IMR-90 (cell line): ENCODE measurements at regions of chr1 and their contacts with region 1.

Region 1: DNA sequence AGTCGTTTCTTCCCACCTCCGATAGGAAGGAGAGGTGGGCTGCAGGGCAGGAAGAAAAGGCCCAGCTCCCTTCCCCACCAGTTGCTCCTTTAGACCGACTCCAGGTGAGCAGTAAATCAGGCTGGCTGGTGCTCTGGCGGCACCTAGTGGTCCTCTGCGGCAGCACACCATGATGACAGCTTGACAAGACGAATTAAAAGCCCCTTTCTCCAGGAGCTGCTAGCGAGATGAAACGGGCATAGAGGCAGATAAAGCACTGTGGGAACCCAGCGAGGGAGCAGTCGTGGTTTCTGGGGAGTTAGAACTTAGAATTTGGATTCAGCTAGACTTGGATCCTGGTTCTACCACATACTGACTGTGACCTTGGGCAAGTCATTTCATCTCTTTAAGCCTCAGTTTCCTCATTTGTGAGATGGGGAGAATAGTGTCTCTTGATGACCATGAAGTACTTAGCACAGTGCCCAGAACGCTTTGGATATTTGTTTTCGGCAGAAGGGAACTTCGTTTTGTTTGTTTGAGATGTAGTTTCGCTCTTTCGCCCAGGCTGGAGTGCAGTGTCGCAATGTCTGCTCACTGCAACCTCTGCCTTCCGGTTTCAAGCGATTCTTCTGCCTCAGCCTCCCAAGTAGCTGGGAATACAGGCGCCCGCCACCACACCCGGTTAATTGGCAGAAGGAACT is 21.8 kb upstream of the COL9A2 start:
- DNase-seq: peak; percentile 77
- ATAC-seq: peak; percentile 97
- H3K4me3 ChIP-seq: no peak overlapping the region
- H3K27ac ChIP-seq: no peak overlapping the region
- H3K4me1 ChIP-seq: no peaks in the 10 kb centered on the region
- H3K27me3 ChIP-seq: peaks cover 5% of the 10 kb centered on the region
- CTCF ChIP-seq: peak; percentile 97
- POLR2A ChIP-seq: peak; percentile 52; the same call in 1 of the 2 replicates
- RAD21 ChIP-seq: peak; percentile 99

Region 2: DNA sequence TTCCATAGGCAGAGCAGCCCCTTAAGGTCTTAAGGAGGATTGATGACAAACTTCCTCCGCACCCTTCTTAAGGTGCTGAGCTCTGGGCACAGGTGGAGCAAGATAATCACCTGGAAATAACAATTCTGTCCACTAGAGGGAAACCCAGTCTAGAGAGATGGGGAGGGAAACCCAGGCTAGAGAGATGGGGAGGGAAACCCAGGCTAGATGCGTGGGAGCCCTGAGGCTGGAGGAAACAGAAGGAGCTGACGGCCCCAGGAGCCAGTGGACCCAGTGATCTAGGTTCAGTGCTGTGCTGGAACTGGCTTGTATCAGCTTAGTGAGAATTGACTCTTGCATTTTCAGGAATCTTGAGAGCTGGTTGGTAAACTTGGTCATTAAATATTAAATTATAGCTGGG is 419.3 kb before region 1 on chr1:
- CTCF ChIA-PET with region 1: no interaction called
- POLR2A ChIA-PET with region 1: no interaction called
- dilution Hi-C with region 1: no loop called
- in situ Hi-C with region 1: no loop called
- intact Hi-C with region 1: loop called (anchors 5 kb)
- DNase-seq: peak; percentile 58
- ATAC-seq: peak; percentile 89
- H3K4me3 ChIP-seq: no peak overlapping the region
- H3K27ac ChIP-seq: no peak overlapping the region
- H3K4me1 ChIP-seq: no peaks in the 10 kb centered on the region
- H3K27me3 ChIP-seq: peaks cover 15% of the 10 kb centered on the region
- CTCF ChIP-seq: peak; percentile 76
- POLR2A ChIP-seq: no peak
- RAD21 ChIP-seq: peak; percentile 78

Region 3: DNA sequence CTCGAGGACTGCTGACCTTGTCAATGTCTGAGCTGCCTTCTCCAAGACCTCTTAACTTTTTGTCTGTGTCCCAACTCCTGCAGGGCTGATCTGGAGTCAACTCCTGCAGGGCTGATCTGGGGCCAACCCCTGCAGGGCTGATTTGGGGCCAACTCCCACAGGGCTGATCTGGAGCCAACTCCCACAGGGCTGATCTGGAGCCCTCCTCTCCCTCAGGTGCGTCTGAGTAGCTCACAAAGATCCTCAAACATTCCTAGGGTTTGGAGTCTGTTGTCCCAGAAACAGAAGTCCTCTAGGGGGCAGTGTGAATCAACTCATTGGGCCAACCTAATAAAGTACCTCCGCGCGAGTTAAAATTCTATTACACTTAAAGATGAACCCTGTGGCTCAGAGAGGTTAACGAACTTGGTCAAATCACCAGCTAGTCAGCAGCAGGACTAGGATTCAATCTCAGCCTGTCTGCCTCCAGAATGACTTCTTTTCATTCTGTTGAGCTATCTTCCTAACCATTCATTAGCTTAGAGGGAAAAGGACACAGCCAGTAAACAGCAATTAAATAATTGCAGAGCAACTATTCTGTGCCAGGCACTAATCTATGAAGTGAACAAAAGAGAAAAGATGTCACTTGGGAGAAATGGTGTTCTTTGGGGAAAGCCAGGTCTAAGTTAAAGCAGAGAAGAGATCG is 194.9 kb before region 1 on chr1:
- CTCF ChIA-PET with region 1: interaction called, 39 read pairs
- POLR2A ChIA-PET with region 1: no interaction called
- dilution Hi-C with region 1: no loop called
- in situ Hi-C with region 1: no loop called
- intact Hi-C with region 1: no loop called
- DNase-seq: peak; percentile 66
- ATAC-seq: peak; percentile 85
- H3K4me3 ChIP-seq: no peak overlapping the region
- H3K27ac ChIP-seq: no peak overlapping the region
- H3K4me1 ChIP-seq: no peaks in the 10 kb centered on the region
- H3K27me3 ChIP-seq: peaks cover 30% of the 10 kb centered on the region
- CTCF ChIP-seq: peak; percentile 82
- POLR2A ChIP-seq: no peak
- RAD21 ChIP-seq: peak; percentile 82

Region 4: GRCh38 chr1:40183055-40183710 is 155.7 kb before region 1 on chr1:
- CTCF ChIA-PET with region 1: interaction called, 5 read pairs
- POLR2A ChIA-PET with region 1: interaction called, 15 read pairs
- dilution Hi-C with region 1: no loop called
- in situ Hi-C with region 1: no loop called
- intact Hi-C with region 1: no loop called
- DNase-seq: peak; percentile 45
- ATAC-seq: peak; percentile 54; the same call in 1 of the 2 replicates
- H3K4me3 ChIP-seq: no peak overlapping the region
- H3K27ac ChIP-seq: no peak overlapping the region
- H3K4me1 ChIP-seq: peaks cover 4% of the 10 kb centered on the region
- H3K27me3 ChIP-seq: no peaks in the 10 kb centered on the region
- CTCF ChIP-seq: peak; percentile 47
- POLR2A ChIP-seq: no peak
- RAD21 ChIP-seq: no peak

Region 5: GRCh38 chr1:40404670-40405462 is 66.0 kb after region 1 on chr1:
- CTCF ChIA-PET with region 1: interaction called, 12 read pairs
- POLR2A ChIA-PET with region 1: no interaction called
- dilution Hi-C with region 1: no loop called
- in situ Hi-C with region 1: loop called (anchors 5 kb)
- intact Hi-C with region 1: loop called (anchors 2 kb)
- DNase-seq: peak; percentile 79
- ATAC-seq: peak; percentile 82
- H3K4me3 ChIP-seq: no peak overlapping the region
- H3K27ac ChIP-seq: no peak overlapping the region
- H3K4me1 ChIP-seq: peaks cover 2% of the 10 kb centered on the region; the same call in 1 of the 2 replicates
- H3K27me3 ChIP-seq: no peaks in the 10 kb centered on the region
- CTCF ChIP-seq: peak; percentile 80
- POLR2A ChIP-seq: no peak
- RAD21 ChIP-seq: peak; percentile 90

Region 6: DNA sequence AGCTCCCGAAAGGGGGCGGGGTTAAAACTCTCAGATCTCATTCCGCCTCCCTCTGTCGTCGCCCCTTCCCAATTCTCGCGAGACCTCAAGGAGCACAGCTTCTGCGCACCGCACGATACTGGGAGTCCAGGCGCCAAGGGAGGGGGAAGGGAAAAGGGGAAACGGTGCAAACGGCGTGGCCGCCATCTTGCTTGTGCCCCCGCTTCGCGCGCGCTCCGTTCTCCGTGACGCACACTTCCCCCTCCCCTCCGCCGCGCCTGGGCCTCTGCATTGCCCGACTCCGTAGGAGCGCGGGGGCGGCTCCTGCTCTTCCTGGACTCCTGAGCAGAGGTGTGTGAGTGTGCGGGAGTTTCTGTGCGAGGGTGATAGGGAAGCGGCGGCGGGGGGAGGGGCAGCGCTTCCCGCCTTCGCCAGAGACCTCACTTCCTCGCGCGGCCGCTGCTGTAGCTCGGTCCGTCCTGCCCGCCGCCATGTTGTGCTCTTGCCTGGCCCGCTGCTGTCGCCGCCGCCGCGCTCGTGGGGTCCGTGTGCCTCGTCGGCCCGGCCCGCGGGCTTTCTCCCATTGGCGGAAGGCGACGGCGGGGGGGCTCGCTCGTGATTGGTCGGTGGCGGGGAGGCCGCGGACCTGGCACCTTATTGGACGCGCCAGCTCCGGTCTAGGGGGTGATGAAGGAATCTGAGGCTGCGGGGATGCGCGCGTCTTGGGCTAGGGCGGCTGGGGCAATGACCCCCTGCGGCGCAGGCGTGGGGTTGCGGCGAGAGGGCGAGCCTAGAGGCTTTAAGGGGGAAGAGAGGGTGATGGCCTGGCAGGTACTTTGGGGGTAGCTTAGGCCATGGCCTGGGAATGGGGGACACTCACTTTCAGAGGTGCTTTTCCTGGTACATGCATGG is 352.9 kb after region 1 on chr1 and contains the start of gene NFYC:
- CTCF ChIA-PET with region 1: no interaction called
- POLR2A ChIA-PET with region 1: no interaction called
- dilution Hi-C with region 1: no loop called
- in situ Hi-C with region 1: no loop called
- intact Hi-C with region 1: no loop called
- DNase-seq: peak; percentile 97
- ATAC-seq: peak; percentile 92
- H3K4me3 ChIP-seq: peak within 1 kb of the TSS; percentile 70
- H3K27ac ChIP-seq: peak within 1 kb of the TSS; percentile 92
- H3K4me1 ChIP-seq: no peaks in the 10 kb centered on the region
- H3K27me3 ChIP-seq: no peaks in the 10 kb centered on the region
- CTCF ChIP-seq: peak; percentile 1; the same call in 1 of the 2 replicates
- POLR2A ChIP-seq: peak; percentile 92
- RAD21 ChIP-seq: no peak
- total RNA-seq, gene NFYC: 43.3 and 45.2 TPM in 2 replicates